Activated B cell treated with CpG ODN at 0.5 μM for 24 hours (primary cell): ENCODE measurements at regions of chr1 and their contacts with region 1.

Region 1: GRCh38 chr1:86380257-86380861 is 15.8 kb downstream of the ODF2L start:
- DNase-seq: no peak
- ATAC-seq: peak; percentile 75
- H3K4me3 Mint-ChIP-seq: no peak overlapping the region
- H3K27ac Mint-ChIP-seq: no peak overlapping the region
- H3K4me1 Mint-ChIP-seq: peaks cover 8% of the 10 kb centered on the region
- H3K27me3 Mint-ChIP-seq: no peaks in the 10 kb centered on the region
- CTCF ChIP-seq: no peak

Region 2: GRCh38 chr1:84450910-84451309 is 1929.4 kb before region 1 on chr1:
- CTCF ChIA-PET with region 1: no interaction called
- POLR2A ChIA-PET with region 1: no interaction called
- intact Hi-C with region 1: no loop called
- DNase-seq: no peak
- ATAC-seq: no peak
- H3K4me3 Mint-ChIP-seq: no peak overlapping the region
- H3K27ac Mint-ChIP-seq: no peak overlapping the region
- H3K4me1 Mint-ChIP-seq: no peaks in the 10 kb centered on the region
- H3K27me3 Mint-ChIP-seq: peaks cover 15% of the 10 kb centered on the region
- CTCF ChIP-seq: no peak

Region 3: GRCh38 chr1:86419277-86419903 is 39.0 kb after region 1 on chr1:
- CTCF ChIA-PET with region 1: no interaction called
- POLR2A ChIA-PET with region 1: no interaction called
- intact Hi-C with region 1: loop called (anchors 1 kb)
- DNase-seq: no peak
- ATAC-seq: peak; percentile 81
- H3K4me3 Mint-ChIP-seq: peak overlapping the region; percentile 80
- H3K27ac Mint-ChIP-seq: peak overlapping the region; percentile 70
- H3K4me1 Mint-ChIP-seq: peaks cover 7% of the 10 kb centered on the region
- H3K27me3 Mint-ChIP-seq: peaks cover 3% of the 10 kb centered on the region
- CTCF ChIP-seq: no peak

Region 4: DNA sequence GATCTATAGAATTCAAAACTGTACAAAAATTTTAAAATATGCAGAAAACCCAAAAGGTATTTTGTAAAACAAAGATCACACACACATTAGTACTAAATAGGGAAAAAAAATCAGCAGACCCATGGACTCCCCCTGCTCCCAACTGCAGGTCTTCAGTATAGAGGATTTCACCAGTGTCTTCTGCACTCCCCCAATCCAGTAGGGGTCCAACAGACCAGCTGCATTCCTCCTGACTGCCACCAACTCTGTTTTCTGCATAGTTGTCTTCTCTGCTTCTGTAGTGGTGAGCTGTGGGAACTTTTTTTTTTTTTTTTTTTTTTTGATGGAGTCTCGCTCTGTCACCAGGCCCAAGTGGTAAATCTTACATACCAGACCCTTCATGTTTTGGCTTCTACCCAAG is 65.6 kb after region 1 on chr1:
- CTCF ChIA-PET with region 1: no interaction called
- POLR2A ChIA-PET with region 1: no interaction called
- intact Hi-C with region 1: no loop called
- DNase-seq: no peak
- ATAC-seq: no peak
- H3K4me3 Mint-ChIP-seq: no peak overlapping the region
- H3K27ac Mint-ChIP-seq: no peak overlapping the region
- H3K4me1 Mint-ChIP-seq: no peaks in the 10 kb centered on the region
- H3K27me3 Mint-ChIP-seq: no peaks in the 10 kb centered on the region
- CTCF ChIP-seq: no peak

Region 5: DNA sequence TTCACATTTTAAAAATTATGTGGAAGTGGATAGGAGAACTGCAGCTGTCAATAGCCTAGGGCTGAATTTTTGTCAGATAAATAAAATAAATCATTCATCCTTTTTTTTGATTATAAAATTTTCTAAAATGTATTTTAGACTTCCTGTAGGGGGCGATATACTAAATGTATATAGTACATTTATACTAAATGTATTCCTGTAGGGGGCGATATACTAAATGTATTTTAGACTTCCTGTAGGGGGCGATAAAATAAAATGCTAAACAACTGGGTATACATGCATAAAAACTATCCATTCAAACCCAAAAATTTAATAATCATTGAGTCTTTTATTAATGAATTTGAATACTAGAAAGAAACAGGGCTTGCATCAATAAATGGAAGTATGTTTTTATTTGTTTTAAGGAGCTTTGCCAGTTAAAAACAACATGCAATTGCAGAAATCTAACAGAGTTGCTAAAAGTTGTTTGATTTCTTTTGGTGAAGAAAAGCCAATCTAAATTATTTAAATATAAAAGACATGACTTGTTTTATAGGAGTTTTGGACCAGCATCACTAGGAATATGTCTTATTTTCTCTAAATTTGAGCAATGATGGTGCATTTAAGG is 119.7 kb after region 1 on chr1:
- CTCF ChIA-PET with region 1: interaction called, 40 read pairs
- POLR2A ChIA-PET with region 1: no interaction called
- intact Hi-C with region 1: loop called (anchors 1 kb)
- DNase-seq: no peak
- ATAC-seq: peak; percentile 56
- H3K4me3 Mint-ChIP-seq: no peak overlapping the region
- H3K27ac Mint-ChIP-seq: no peak overlapping the region
- H3K4me1 Mint-ChIP-seq: peaks cover 2% of the 10 kb centered on the region
- H3K27me3 Mint-ChIP-seq: peaks cover 15% of the 10 kb centered on the region
- CTCF ChIP-seq: peak; percentile 100

Region 6: DNA sequence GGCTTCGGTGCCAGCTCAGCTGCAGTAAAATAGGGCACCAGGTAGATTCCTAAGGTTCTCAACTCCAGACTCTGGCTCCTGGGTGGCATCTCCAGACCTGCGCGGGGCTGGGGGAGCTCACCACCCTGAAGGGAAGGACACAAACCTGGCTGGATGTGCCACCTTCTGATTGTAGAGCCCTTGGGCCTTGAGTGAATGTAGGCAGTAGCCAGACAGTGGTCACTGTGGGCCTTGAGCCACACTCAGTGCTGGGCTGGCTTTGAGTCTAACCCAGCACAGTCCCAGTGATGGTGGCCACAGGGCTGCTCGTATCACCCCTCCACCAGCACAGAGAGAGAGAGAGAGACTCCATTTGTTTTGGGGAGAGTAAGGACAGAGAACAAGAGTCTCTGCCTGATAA is 286.0 kb after region 1 on chr1:
- CTCF ChIA-PET with region 1: no interaction called
- POLR2A ChIA-PET with region 1: no interaction called
- intact Hi-C with region 1: no loop called
- DNase-seq: no peak
- ATAC-seq: no peak
- H3K4me3 Mint-ChIP-seq: no peak overlapping the region
- H3K27ac Mint-ChIP-seq: no peak overlapping the region
- H3K4me1 Mint-ChIP-seq: peaks cover 3% of the 10 kb centered on the region
- H3K27me3 Mint-ChIP-seq: no peaks in the 10 kb centered on the region
- CTCF ChIP-seq: no peak

Region 7: GRCh38 chr1:86687595-86687994 is 307.2 kb after region 1 on chr1:
- CTCF ChIA-PET with region 1: interaction called, 3 read pairs
- POLR2A ChIA-PET with region 1: no interaction called
- intact Hi-C with region 1: loop called (anchors 5 kb)
- DNase-seq: no peak
- ATAC-seq: peak; percentile 34
- H3K4me3 Mint-ChIP-seq: no peak overlapping the region
- H3K27ac Mint-ChIP-seq: no peak overlapping the region
- H3K4me1 Mint-ChIP-seq: no peaks in the 10 kb centered on the region
- H3K27me3 Mint-ChIP-seq: no peaks in the 10 kb centered on the region
- CTCF ChIP-seq: no peak

Region 8: GRCh38 chr1:86741947-86742572 is 361.7 kb after region 1 on chr1:
- CTCF ChIA-PET with region 1: interaction called, 6 read pairs
- POLR2A ChIA-PET with region 1: no interaction called
- intact Hi-C with region 1: loop called (anchors 1 kb)
- DNase-seq: no peak
- ATAC-seq: no peak
- H3K4me3 Mint-ChIP-seq: no peak overlapping the region
- H3K27ac Mint-ChIP-seq: no peak overlapping the region
- H3K4me1 Mint-ChIP-seq: peaks cover 2% of the 10 kb centered on the region
- H3K27me3 Mint-ChIP-seq: no peaks in the 10 kb centered on the region
- CTCF ChIP-seq: peak; percentile 73

Region 9: GRCh38 chr1:86846166-86846647 is 465.8 kb after region 1 on chr1:
- CTCF ChIA-PET with region 1: no interaction called
- POLR2A ChIA-PET with region 1: no interaction called
- intact Hi-C with region 1: no loop called
- DNase-seq: no peak
- ATAC-seq: no peak
- H3K4me3 Mint-ChIP-seq: no peak overlapping the region
- H3K27ac Mint-ChIP-seq: no peak overlapping the region
- H3K4me1 Mint-ChIP-seq: no peaks in the 10 kb centered on the region
- H3K27me3 Mint-ChIP-seq: no peaks in the 10 kb centered on the region
- CTCF ChIP-seq: no peak

Region 10: DNA sequence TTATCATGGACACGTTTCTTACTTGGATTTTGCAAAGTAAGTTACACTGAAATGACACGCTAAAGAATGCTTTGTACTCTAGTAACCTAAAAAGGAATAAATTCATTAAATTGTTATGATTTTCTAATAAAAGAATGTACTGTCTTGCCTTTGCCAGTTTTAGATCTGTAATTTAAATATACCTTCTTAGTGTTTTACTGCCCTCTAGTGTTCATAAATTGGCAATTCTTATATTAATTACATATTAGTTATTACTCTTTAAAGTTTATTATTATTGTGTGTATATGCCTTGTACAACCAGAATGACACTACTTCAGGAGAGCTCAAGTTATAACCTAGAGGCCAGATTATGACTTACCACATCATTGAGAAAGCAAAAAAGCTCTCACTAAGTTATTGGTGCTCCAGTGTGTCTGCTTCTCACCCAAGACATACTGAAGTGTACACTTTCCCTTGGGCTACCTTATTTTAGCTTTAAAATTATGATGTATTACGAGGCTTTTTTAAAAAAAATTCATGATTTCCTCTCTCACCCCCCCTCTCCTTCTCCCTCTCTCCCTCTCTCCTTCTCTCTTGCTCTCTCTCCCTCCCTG is 704.0 kb after region 1 on chr1:
- CTCF ChIA-PET with region 1: no interaction called
- POLR2A ChIA-PET with region 1: no interaction called
- intact Hi-C with region 1: loop called (anchors 5 kb)
- DNase-seq: no peak
- ATAC-seq: peak; percentile 28
- H3K4me3 Mint-ChIP-seq: no peak overlapping the region
- H3K27ac Mint-ChIP-seq: no peak overlapping the region
- H3K4me1 Mint-ChIP-seq: peaks cover 12% of the 10 kb centered on the region
- H3K27me3 Mint-ChIP-seq: no peaks in the 10 kb centered on the region
- CTCF ChIP-seq: peak; percentile 42